Left colon (tissue), 2 donors: ENCODE measurements at regions of chr9 and their contacts with region 1.

Region 1: DNA sequence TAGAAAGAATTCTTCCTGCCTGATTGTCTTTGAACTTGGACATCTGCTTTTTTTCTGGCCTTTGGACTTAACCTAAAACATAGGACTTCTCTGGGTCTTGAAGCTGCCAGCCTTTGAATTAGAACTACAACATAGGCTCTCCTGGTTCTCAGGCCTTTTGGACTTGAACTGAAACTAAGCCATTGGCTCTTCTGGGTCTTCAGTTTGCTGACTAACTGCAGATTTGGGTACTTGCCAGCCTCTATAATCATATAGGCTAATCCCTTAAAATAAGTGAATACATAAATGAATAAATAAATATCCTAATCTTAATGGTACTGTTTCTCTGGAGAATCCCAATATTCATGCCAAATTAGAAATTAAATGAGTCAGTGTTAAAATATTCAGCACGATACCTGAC is 473.4 kb upstream of the PAPPA start:
- DNase-seq: no peak
- ATAC-seq: no peak

Region 2: DNA sequence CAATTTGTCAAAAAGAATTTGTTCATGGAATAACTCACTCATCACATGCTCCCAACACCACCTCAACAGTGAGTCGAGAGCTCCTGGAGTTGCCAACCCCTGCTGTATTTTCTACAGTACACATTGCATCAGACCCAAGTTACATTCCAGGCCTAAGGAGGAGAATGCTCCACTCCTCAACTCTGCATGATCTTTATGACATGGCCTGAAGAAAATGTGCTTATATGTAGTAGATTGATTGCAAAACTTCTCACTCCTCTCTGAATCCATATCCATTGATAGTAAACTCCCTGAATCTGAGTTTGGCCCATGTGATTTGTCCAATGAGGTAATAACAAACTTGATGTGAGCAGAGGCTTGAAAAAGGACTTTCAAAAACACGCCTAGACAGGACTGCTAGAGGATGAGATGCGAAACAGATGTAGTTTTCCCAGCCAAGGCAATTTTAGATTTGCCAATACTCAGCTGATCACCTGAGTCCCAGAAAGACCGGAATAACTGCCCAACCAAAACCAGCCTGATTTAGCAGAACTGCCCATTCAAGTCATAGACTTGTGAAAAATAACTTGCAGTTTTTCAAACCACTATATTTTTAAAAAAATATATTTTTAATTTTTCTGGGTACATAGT is 444.3 kb after region 1 on chr9:
- intact Hi-C with region 1: loop called in 1 of 2 experiments (anchors 10 kb)
- DNase-seq: no peak
- ATAC-seq: no peak